Endothelial cell of umbilical vein (primary cell): ENCODE measurements at regions of chr10 and their contacts with region 1.

Region 1: GRCh38 chr10:88744002-88744401 is 15.8 kb upstream of the LIPN start:
- DNase-seq: no peak
- H3K4me3 ChIP-seq: no peak overlapping the region
- H3K27ac ChIP-seq: no peak overlapping the region
- H3K4me1 ChIP-seq: no peaks in the 10 kb centered on the region
- H3K27me3 ChIP-seq: no peaks in the 10 kb centered on the region
- CTCF ChIP-seq: no peak
- POLR2A ChIP-seq: no peak

Region 2: DNA sequence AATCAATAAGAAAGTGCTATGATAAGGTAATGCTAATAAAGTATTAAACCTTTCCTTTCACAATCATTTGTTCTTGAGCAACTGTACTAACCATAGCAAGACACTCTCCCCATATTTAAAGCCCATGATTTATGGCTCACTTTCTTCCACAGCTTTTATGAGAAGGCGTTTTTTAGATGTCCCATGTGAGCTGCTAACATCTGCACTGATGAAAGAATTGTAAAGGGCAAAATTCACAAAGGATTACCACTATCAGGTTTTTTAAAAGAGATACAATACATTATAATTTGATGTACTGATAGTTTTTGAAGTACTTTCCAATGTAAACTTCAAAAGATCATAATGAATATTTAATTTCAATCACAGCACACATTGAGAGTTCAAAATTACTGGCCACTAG is 236.6 kb before region 1 on chr10:
- CTCF ChIA-PET with region 1: no interaction called
- POLR2A ChIA-PET with region 1: no interaction called
- dilution Hi-C with region 1: no loop called
- intact Hi-C with region 1: no loop called
- DNase-seq: no peak
- H3K4me3 ChIP-seq: no peak overlapping the region
- H3K27ac ChIP-seq: no peak overlapping the region
- H3K4me1 ChIP-seq: no peaks in the 10 kb centered on the region
- H3K27me3 ChIP-seq: no peaks in the 10 kb centered on the region
- CTCF ChIP-seq: no peak
- POLR2A ChIP-seq: no peak

Region 3: GRCh38 chr10:88728107-88728763 is 15.8 kb before region 1 on chr10:
- CTCF ChIA-PET with region 1: interaction called, 11 read pairs
- POLR2A ChIA-PET with region 1: no interaction called
- dilution Hi-C with region 1: no loop called
- intact Hi-C with region 1: no loop called
- DNase-seq: peak; percentile 13
- H3K4me3 ChIP-seq: no peak overlapping the region
- H3K27ac ChIP-seq: no peak overlapping the region
- H3K4me1 ChIP-seq: no peaks in the 10 kb centered on the region
- H3K27me3 ChIP-seq: peaks cover 3 to 13% of the 10 kb centered on the region in 2 experiments
- CTCF ChIP-seq: peak; percentile 55 to 58
- POLR2A ChIP-seq: no peak

Region 4: DNA sequence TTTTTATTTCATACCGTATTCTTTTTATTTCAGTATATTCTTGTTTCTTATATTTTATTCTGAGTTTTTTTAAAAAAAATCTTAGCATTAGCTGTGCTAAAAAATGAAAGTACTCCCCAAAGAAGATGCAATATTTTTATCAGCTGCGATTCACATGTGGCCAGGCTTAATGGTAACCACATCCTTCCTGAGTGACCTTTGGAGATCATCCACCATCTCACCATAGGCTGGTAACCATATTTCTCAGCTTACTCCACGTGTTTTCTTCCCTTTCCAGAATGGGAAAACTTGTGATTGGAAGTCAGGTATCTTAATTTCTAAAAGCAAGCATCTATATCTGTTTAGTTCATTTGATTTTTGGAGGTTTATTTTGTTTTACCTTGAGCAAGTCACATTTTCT is 39.7 kb after region 1 on chr10:
- CTCF ChIA-PET with region 1: no interaction called
- POLR2A ChIA-PET with region 1: no interaction called
- dilution Hi-C with region 1: no loop called
- intact Hi-C with region 1: no loop called
- DNase-seq: no peak
- H3K4me3 ChIP-seq: no peak overlapping the region
- H3K27ac ChIP-seq: no peak overlapping the region
- H3K4me1 ChIP-seq: peaks cover 4% of the 10 kb centered on the region
- H3K27me3 ChIP-seq: no peaks in the 10 kb centered on the region
- CTCF ChIP-seq: no peak
- POLR2A ChIP-seq: no peak

Region 5: GRCh38 chr10:88913127-88913526 is 169.1 kb after region 1 on chr10:
- CTCF ChIA-PET with region 1: no interaction called
- POLR2A ChIA-PET with region 1: no interaction called
- dilution Hi-C with region 1: no loop called
- intact Hi-C with region 1: no loop called
- DNase-seq: no peak
- H3K4me3 ChIP-seq: no peak overlapping the region
- H3K27ac ChIP-seq: no peak overlapping the region
- H3K4me1 ChIP-seq: no peaks in the 10 kb centered on the region
- H3K27me3 ChIP-seq: no peaks in the 10 kb centered on the region
- CTCF ChIP-seq: no peak
- POLR2A ChIP-seq: no peak